HepG2 (cell line): ENCODE measurements at regions of chr6 and their contacts with region 1.

Region 1: DNA sequence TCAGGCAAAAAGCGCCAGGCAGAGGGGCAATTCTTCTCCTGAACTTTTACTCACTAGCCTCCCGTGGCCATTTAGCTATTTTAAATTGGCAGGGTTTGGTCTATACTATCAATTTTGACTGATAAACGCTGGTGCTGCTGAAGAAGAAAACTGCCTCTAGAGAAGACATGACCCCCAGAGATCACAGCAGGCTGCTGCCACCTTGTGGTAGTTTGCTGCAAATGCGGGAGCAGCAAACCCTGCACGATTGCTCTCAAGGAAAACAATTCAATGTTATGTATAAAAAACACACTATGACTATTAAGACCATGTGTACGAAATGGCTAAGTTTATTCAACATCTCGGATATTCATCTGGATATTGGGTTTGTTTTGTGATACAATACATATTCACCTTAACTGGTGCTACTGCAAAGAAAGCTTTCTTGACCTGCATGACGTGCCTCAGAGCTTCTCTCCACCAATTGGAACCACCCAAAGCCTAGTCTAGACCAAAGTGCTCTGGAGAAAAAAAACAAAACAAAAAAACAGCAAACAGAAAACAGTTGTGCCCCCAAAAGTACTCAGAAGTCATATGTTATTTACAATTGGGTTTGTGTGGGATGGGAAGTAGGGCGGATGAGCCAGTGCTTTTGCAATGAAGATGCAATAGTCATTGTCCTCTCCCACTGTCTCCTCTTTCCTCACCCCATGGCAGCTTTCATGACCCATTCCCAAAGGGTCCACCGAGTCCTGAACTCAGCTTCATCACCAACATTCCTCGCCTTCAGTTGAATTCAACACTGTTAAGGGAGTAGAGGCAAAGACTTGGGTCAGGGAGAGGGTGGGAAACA is 19.6 kb upstream of the IL17F start:
- DNase-seq: peak; percentile 64
- ATAC-seq: peak; percentile 71
- H3K4me3 ChIP-seq: no peak overlapping the region
- H3K27ac ChIP-seq: no peak overlapping the region
- H3K4me1 ChIP-seq: no peaks in the 10 kb centered on the region
- H3K27me3 ChIP-seq: no peaks in the 10 kb centered on the region
- CTCF ChIP-seq: peak; percentile 94
- EP300 ChIP-seq: no peak
- POLR2A ChIP-seq: no peak
- RAD21 ChIP-seq: peak; percentile 84

Region 2: GRCh38 chr6:52087498-52087999 is 176.4 kb before region 1 on chr6 and contains the start of gene PKHD1:
- CTCF ChIA-PET with region 1: interaction called, 3 read pairs
- POLR2A ChIA-PET with region 1: no interaction called
- in situ Hi-C with region 1: no loop called
- intact Hi-C with region 1: loop called (anchors 10 kb)
- DNase-seq: peak; percentile 55
- ATAC-seq: peak; percentile 96
- H3K4me3 ChIP-seq: peak within 1 kb of the TSS in 1 of 3 experiments; percentile 20; a peak in 1 of 6 replicates
- H3K27ac ChIP-seq: no peak within 1 kb of the TSS
- H3K4me1 ChIP-seq: peaks cover 24% of the 10 kb centered on the region
- H3K27me3 ChIP-seq: no peaks in the 10 kb centered on the region
- CTCF ChIP-seq: peak; percentile 74
- EP300 ChIP-seq: no peak
- POLR2A ChIP-seq: no peak
- RAD21 ChIP-seq: no peak
- total RNA-seq, gene PKHD1: 0.10 and 0.13 TPM in 2 replicates

Region 3: DNA sequence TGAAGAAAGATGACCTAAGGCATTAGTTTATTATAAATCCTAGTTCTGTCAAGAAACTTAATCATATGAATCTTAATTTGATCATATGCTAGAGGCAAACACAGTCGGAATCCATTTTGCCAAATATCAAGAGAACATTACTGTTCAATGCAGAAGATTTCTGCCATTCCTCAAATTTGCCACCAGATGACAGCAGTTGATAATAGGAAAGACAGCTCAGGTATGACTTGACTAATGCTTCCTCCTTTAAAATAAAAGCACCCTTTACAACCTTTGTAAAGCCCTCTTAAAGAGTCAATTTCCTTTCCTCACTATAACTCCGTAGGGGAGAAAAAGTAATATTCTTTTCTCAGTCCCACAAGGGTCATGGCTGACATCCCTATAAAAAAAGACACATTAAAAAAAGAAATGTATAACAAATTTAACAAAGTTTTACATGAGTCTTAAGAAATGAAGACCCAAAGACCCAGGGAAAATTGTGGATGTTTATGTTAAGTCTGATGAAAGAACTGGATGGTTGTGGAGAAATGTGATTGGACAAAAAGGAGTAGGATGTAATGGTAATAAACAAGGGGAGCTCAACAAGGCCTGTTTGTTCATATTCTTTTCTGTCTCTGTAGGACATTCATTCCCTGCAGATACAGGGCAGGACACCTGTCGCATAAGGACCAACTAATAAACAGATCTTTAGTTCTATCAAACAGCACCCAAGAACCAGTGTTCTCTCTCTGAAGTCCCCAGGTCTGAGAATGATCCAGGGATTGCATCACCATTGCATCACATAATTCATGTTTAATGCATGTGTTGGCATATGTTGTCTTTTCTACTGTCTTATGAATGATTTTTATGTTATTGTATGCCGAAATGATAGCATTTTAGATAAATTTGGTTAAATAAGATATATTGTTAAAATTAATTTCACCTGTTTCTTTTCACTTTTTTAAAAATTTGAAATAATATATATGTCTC is 100.7 kb before region 1 on chr6:
- CTCF ChIA-PET with region 1: interaction called, 52 read pairs
- POLR2A ChIA-PET with region 1: no interaction called
- in situ Hi-C with region 1: loop called (anchors 5 kb)
- intact Hi-C with region 1: loop called (anchors 1 kb)
- DNase-seq: peak; percentile 53
- ATAC-seq: peak; percentile 87
- H3K4me3 ChIP-seq: no peak overlapping the region
- H3K27ac ChIP-seq: no peak overlapping the region
- H3K4me1 ChIP-seq: peaks cover 25% of the 10 kb centered on the region
- H3K27me3 ChIP-seq: no peaks in the 10 kb centered on the region
- CTCF ChIP-seq: peak; percentile 85
- EP300 ChIP-seq: no peak
- POLR2A ChIP-seq: no peak
- RAD21 ChIP-seq: peak; percentile 88

Region 4: GRCh38 chr6:52213127-52213526 is 50.8 kb before region 1 on chr6:
- CTCF ChIA-PET with region 1: no interaction called
- POLR2A ChIA-PET with region 1: no interaction called
- in situ Hi-C with region 1: no loop called
- intact Hi-C with region 1: loop called (anchors 1 kb)
- DNase-seq: peak; percentile 51
- ATAC-seq: peak; percentile 93
- H3K4me3 ChIP-seq: no peak overlapping the region
- H3K27ac ChIP-seq: no peak overlapping the region
- H3K4me1 ChIP-seq: peaks cover 13% of the 10 kb centered on the region
- H3K27me3 ChIP-seq: peaks cover 0 to 7% of the 10 kb centered on the region in 2 experiments; a peak in 1 of 5 replicates
- CTCF ChIP-seq: peak; percentile 63
- EP300 ChIP-seq: peak in 1 of 2 experiments; percentile 46; a peak in 1 of 4 replicates
- POLR2A ChIP-seq: no peak
- RAD21 ChIP-seq: no peak

Region 5: DNA sequence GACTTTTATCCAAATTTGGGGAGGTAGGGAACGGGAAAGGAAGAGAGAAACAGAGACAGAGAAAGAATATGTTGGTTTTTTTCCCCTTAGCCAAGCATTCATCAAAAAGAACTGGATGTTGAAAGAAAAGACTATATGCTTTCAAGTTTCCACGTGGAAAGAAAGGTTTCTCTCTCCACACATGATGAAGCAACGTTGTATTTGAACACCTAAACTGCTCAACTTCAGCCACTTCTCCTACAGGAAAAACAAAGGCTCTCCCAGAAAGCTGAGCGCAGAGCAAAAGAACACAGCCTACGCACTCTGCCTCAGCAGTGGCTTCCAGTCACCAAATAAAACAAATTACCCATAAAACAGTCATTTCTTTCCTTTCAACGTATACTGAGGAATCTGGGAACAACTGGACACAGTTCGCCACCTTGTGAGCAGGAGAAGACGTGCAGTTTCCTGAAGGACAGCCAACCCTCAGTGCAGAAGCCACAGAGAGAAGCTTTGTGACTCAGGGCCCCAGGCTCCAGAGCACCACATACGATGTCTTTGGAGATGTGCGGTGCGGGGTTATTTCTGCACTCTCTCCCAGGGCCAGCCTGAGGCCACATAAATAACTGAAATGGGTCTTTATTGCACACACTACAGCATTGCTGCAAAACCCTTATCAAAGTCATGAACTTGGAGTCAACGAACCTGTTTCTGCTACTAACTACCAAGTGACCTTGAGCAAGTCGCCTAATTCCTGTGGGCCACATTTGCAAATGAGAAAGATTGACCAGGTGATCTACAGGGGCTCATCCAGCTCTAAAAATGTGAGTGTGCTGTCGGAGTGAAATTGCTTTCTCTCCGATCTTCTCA is 29.7 kb before region 1 on chr6:
- CTCF ChIA-PET with region 1: interaction called, 4 read pairs
- POLR2A ChIA-PET with region 1: no interaction called
- in situ Hi-C with region 1: no loop called
- intact Hi-C with region 1: loop called (anchors 1 kb)
- DNase-seq: peak; percentile 68
- ATAC-seq: peak; percentile 99
- H3K4me3 ChIP-seq: no peak overlapping the region; a peak in 1 of 6 replicates
- H3K27ac ChIP-seq: no peak overlapping the region
- H3K4me1 ChIP-seq: peaks cover 10% of the 10 kb centered on the region
- H3K27me3 ChIP-seq: peaks cover 0 to 27% of the 10 kb centered on the region in 2 experiments; a peak in 2 of 5 replicates
- CTCF ChIP-seq: peak; percentile 86
- EP300 ChIP-seq: no peak
- POLR2A ChIP-seq: no peak
- RAD21 ChIP-seq: peak; percentile 70; the same call in 1 of the 2 replicates